BJ (cell line): ENCODE measurements at regions of chr2 and their contacts with region 1.

Region 1: GRCh38 chr2:42859006-42859552 is 66.7 kb upstream of the HAAO start:
- DNase-seq: no peak
- H3K4me3 ChIP-seq: no peak overlapping the region
- H3K27me3 ChIP-seq: no peaks in the 10 kb centered on the region
- CTCF ChIP-seq: peak; percentile 91

Region 2: DNA sequence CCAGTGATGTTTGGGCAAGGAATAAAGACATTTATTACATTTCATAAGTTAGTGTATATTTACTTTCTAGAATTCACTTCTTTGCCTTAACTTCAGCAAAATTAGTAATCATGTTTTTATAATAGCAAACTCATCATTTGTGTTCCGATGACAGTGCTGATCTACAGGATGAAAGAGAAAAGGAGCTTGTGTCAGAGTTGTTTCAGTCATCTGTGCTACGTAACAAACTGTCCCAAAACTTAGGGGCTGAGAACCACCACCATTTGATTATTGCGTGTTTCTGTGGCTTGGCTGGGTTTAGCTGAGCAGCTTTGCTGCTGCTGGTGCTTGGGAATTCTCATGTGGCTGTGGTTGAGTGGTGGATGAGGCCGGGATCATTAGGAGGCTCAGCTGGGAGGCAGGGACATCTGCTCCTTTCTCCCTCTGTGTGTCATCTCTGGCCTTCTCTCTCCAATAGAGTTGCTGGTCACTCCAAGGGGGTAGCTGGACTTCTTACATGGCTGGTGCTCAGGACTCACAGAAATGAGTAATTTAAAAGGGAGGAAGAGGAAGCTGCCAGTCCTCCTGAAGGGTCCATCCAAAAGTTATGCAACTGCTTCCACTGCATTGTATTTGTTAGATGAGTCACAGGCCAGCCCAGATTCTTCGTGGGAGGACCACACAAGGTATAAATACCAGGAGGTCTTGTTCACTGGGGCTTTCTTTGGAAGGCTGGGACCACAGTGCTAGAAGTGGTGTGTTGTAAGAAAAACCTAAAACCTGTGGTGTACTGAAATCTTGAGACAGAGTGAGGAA is 23.3 kb before region 1 on chr2:
- CTCF ChIA-PET with region 1: interaction called, 17 read pairs
- POLR2A ChIA-PET with region 1: no interaction called
- DNase-seq: peak; percentile 97
- H3K4me3 ChIP-seq: no peak overlapping the region
- H3K27me3 ChIP-seq: no peaks in the 10 kb centered on the region
- CTCF ChIP-seq: no peak

Region 3: DNA sequence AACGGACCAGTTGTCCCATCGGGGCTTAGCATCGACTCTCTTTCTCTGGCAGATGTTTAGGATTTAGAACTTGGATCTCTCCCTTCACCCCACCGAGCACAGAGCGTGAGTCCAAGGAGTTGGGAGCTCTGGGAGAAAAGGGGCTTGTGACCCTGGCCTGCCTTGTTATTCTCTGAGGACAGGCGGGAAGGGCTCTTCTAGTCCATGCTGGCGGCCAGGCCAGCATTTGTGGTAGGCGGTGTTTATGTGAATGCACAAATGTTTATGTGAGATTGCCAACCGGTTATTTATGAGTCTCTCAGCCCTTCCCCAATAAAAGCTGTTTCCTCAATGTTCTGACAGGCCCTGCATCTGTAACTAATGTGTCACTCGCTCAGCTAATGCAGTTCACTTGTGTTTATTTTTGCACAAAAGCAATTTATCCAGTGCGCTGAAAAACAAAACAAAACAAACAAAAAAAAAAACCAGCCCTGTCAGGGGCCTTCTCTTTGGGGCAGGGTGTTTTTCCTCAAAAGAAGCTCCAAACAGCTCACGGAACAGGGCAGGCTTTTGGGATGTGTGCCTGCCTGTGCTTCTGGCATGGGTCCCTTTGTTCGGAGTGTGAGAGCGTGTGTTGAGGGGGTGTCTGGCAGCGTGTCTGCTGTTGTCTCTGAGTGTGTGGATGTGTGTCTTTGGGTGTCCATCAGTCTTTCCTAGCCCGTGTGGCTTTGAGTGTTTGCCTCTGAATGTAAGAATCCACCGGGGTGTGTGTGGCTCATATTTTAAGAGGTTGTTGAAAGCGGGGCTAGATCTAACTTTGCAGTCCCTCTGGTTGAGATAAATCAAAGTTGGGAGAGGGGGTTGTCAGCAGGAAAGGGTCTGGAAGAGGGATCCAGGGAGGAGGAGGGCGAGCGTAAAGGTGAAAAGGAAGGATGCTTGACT is 13.9 kb before region 1 on chr2:
- CTCF ChIA-PET with region 1: interaction called, 21 read pairs
- POLR2A ChIA-PET with region 1: no interaction called
- DNase-seq: peak; percentile 93
- H3K4me3 ChIP-seq: no peak overlapping the region
- H3K27me3 ChIP-seq: no peaks in the 10 kb centered on the region
- CTCF ChIP-seq: no peak

Region 4: GRCh38 chr2:42917425-42917927 is 58.4 kb after region 1 on chr2:
- CTCF ChIA-PET with region 1: interaction called, 61 read pairs
- POLR2A ChIA-PET with region 1: no interaction called
- DNase-seq: peak; percentile 77
- H3K4me3 ChIP-seq: no peak overlapping the region
- H3K27me3 ChIP-seq: no peaks in the 10 kb centered on the region
- CTCF ChIP-seq: no peak

Region 5: GRCh38 chr2:42928692-42929545 is 69.8 kb after region 1 on chr2:
- CTCF ChIA-PET with region 1: interaction called, 61 read pairs
- POLR2A ChIA-PET with region 1: interaction called, 3 read pairs
- DNase-seq: no peak
- H3K4me3 ChIP-seq: no peak overlapping the region
- H3K27me3 ChIP-seq: no peaks in the 10 kb centered on the region
- CTCF ChIP-seq: peak; percentile 67